Mammary epithelial cell (primary cell): ENCODE measurements at regions of chr14 and their contacts with region 1.

Region 1: DNA sequence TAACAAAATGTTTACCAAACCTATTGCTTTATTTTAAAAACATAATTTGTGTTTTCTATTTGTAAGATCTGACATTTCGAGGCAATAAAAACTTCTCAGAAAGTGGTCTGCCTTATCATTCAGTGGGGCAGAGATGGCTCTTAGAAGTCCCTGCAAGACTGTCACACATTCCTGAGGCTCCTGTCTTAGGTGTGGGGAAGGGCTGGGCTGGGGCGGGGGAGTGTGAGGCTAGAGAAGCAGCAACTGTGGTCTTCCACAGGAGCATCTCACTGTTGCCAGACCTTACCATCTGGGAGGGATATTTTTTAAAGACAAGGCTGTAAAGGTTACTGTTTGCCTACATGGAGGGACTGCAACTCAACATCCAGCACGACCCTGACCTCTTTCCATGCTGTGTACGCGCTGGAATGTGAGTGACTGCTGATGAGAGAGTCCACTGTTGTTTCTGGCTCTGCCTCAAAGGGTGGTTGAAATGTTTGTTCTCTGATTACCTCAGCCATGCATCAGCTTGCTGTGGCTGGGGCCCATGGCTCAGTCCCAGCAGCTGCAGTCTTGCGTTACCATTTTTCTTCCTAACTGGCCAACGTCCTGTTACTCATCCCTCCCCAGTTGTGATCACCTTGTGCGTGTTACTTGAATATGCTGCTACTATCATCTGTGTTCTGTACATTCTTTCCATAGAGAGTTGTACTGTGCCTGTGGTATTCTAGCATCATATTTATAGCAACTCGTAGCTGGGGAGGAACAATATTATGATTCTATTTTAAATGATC is 12.4 kb downstream of the ERG28 start:
- DNase-seq: peak; percentile 86
- H3K4me3 ChIP-seq: no peak overlapping the region
- H3K27ac ChIP-seq: peak overlapping the region; percentile 73
- H3K4me1 ChIP-seq: peaks cover 38% of the 10 kb centered on the region
- H3K27me3 ChIP-seq: no peaks in the 10 kb centered on the region
- CTCF ChIP-seq: no peak

Region 2: DNA sequence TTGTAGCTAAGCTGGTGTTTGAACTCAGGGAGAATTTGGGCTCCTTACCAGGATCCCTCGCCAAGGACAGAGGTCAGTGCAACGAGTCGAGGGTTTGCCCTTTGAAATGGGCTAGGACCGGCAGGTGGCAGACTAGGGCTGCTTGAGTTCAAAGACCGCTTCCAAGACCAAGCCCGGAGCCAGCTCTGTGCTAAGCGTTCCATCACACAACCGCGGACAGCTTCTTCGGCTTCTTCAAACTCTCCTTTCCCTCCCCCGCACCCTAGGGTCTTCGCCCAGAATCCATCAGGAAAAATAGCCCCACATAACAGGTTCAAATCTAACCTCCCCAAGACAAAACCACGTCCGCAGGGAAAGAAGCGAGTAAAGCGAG is 70.5 kb before region 1 on chr14:
- CTCF ChIA-PET with region 1: no interaction called
- dilution Hi-C with region 1: no loop called
- in situ Hi-C with region 1: loop called (anchors 5 kb)
- intact Hi-C with region 1: no loop called
- DNase-seq: peak; percentile 66
- H3K4me3 ChIP-seq: peak overlapping the region; percentile 51 to 71 (median 51)
- H3K27ac ChIP-seq: peak overlapping the region; percentile 17
- H3K4me1 ChIP-seq: peaks cover 10% of the 10 kb centered on the region
- H3K27me3 ChIP-seq: no peaks in the 10 kb centered on the region
- CTCF ChIP-seq: peak; percentile 74 to 89

Region 3: GRCh38 chr14:75591331-75591946 is 56.8 kb before region 1 on chr14:
- CTCF ChIA-PET with region 1: no interaction called
- dilution Hi-C with region 1: loop called (anchors 5 kb)
- in situ Hi-C with region 1: no loop called
- intact Hi-C with region 1: no loop called
- DNase-seq: no peak
- H3K4me3 ChIP-seq: no peak overlapping the region
- H3K27ac ChIP-seq: no peak overlapping the region
- H3K4me1 ChIP-seq: no peaks in the 10 kb centered on the region
- H3K27me3 ChIP-seq: peaks cover 2% of the 10 kb centered on the region
- CTCF ChIP-seq: no peak

Region 4: DNA sequence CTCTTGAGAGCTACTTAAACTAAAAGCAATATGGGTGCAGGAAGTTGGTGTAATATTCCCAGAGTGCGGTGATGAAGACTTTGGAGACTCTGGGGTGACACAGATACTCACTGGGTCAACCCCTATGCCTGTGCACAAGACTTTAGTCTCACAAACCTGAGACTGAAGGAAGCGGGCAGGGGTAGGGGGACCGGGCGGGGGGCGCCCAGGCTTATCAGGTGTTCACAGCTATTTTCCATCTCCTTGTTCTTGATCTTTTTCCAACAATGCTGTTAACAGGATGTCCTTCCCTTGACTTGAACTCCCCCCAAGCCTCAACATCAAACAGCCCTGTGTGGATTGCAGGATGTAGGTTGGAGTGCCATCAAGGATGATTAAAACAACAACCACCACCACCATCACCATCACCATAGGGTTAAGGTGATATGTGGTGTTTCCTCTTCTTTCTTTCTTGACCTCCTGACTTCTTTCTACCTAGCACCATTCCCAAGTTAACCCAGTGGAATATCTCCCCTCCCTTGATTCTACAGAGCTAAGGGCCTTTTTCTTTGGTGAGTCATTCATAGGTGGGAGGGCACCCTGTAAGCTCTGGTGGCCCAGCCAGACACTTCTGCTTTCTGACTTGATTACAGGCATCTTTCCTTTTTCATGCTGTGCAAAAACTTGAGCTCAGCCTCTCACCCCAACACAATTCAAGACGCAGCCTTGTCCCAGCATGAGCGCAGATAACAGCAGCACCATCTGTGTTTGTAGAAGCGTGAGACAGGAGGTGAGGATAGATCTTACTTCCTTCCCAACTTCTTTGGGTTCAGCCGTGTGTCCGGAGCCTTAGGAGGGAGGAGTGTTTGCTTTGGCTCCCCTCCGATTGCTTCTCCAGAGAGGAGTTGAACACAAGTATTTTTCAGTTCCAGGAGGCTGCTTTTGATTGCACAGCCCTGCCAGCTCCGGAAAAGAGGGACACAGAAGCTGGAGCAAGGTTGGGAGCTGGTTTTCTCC is 43.1 kb before region 1 on chr14:
- CTCF ChIA-PET with region 1: no interaction called
- dilution Hi-C with region 1: no loop called
- in situ Hi-C with region 1: no loop called
- intact Hi-C with region 1: no loop called
- DNase-seq: no peak
- H3K4me3 ChIP-seq: no peak overlapping the region
- H3K27ac ChIP-seq: no peak overlapping the region
- H3K4me1 ChIP-seq: no peaks in the 10 kb centered on the region
- H3K27me3 ChIP-seq: no peaks in the 10 kb centered on the region
- CTCF ChIP-seq: no peak